ENCODE measurements at regions of chr19 and their contacts with region 1.

Region 1: GRCh38 chr19:40662921-40663694 is 27.3 kb downstream of the NUMBL start:
- DNase-seq: peak; percentile 81 to 98 (median 92)

Region 2: DNA sequence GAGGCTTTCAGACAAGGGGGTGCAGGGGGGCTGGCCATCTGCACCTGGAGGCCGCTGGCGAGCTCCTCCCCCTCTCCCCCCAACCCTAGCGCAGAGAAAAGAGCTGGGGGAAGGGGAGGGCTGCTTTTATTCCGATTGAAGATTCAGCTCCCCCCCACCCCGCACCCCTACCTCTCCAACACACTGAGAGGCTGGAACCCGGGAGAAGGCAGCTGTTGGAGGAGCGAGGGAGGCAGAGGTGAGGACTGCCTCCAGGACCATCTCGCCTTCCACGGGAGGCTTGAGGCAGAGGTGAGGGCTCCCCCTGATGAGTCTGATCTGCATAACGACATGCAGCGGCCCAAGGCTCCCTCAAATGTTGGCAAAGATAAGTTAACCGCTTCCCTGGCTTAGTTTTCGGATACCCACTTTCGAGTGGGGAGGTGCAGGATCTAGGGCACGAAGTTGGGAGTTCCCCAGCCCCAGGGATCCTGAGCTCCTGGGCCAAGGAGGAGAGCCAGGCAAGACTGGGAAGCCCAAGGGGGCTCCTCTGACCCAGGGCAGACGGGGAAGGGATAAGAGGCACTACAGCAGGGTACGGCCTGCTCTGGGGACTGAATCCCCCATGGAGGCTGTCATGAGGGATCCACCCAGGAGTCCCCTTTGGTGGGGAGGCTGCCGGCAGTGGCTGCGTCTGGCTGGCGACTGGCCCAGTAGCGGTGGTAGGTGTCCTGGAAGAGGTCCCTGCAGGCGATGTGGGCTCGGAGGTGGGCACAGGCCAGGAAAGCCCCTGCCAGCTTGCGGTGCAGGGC is 28.5 kb after region 1 on chr19:
- intact Hi-C with region 1: no loop called
- DNase-seq: peak in 2 of 10 donors; percentile 74 to 86

Region 3: GRCh38 chr19:40716655-40717324 is 53.7 kb after region 1 on chr19 and contains the starts of genes COQ8B and ITPKC:
- intact Hi-C with region 1: loop called (anchors 1 kb)
- DNase-seq: peak; percentile 99 to 100 (median 100)

Region 4: GRCh38 chr19:40806488-40807468 is 143.7 kb after region 1 on chr19:
- intact Hi-C with region 1: loop called (anchors 5 kb)
- DNase-seq: peak; percentile 80 to 99 (median 90)

Region 5: DNA sequence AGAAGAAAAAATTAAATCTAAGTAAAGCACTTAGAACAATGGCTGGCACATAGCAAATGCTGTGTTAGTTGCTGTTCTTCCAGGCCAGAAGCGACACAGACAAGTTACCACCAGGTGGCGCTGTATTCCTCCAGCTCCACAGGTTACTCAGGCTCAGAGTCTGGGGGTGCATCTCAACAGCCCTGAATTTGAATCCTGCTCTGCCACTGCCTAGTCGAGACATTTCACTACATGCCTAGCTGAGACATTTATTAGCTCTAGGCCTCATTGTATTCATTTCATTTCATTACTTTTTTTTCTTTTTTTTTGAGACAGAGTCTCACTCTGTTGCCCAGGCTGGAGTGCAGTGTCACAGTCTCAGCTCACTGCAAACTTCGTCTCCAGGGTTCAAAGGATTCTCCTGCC is 311.5 kb after region 1 on chr19:
- intact Hi-C with region 1: loop called (anchors 10 kb)
- DNase-seq: peak in 8 of 10 donors; percentile 34 to 91 (median 72)

Region 6: DNA sequence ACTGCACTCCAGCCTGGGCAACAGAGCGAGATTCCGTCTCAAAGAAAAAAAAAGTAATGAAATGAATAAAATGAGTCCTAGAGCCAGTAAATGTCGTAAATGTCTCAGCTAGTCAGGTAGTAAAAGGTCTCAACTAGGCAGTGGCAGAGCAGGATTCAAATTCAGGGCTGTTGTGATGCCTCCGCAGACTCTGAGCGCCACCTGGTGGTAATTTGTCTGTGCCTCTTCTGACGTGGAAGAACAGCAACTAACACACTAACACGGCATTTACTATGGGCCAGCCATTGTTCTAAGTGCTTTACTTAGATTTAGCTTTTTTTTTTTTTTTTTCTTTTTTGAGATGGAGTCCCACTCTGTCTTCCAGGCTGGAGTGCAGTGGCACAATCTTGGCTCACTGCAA is 481.3 kb after region 1 on chr19:
- intact Hi-C with region 1: loop called (anchors 2 kb)
- DNase-seq: peak in 8 of 10 donors; percentile 26 to 94 (median 70)

Region 7: DNA sequence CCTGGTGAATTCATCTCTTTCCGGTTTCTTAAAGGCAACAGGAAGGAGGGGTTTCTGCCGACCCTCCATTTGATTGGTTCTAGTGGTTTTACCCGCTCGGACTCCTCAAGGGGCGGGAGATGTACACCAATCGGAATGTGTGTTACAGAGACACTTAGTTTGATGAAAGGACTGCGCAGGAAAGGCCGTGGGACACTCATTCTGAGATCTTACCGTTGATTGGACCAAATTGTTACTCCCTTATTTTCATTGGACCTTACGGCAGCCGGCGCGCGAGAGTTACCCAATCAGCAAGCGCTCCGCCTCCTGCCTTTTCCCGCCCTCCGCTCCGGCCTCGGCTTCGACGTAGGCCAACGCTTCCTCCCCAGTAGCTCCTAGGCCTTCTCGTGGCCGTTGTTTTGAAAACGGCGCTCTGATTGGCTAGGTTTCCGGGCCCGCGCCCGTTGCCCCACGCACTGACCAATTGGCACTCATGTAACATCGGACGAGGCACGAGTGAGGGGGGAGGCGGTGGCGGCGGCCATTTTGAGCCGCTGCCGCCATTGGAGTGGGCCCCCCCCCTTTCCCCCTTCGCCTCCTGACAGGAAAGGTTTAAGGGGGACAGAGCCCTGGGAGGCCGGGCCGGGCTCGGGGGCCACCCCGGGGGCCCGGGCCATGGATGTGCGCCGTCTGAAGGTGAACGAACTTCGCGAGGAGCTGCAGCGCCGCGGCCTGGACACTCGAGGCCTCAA is 600.9 kb after region 1 on chr19 and contains the start of gene HNRNPUL1:
- intact Hi-C with region 1: loop called (anchors 2 kb)
- DNase-seq: peak; percentile 97 to 100 (median 98)

Measured in posterior cingulate gyrus (tissue), 11 donors.